Prostate gland (tissue), 2 donors: ENCODE measurements at regions of chr1 and their contacts with region 1.

Region 1: DNA sequence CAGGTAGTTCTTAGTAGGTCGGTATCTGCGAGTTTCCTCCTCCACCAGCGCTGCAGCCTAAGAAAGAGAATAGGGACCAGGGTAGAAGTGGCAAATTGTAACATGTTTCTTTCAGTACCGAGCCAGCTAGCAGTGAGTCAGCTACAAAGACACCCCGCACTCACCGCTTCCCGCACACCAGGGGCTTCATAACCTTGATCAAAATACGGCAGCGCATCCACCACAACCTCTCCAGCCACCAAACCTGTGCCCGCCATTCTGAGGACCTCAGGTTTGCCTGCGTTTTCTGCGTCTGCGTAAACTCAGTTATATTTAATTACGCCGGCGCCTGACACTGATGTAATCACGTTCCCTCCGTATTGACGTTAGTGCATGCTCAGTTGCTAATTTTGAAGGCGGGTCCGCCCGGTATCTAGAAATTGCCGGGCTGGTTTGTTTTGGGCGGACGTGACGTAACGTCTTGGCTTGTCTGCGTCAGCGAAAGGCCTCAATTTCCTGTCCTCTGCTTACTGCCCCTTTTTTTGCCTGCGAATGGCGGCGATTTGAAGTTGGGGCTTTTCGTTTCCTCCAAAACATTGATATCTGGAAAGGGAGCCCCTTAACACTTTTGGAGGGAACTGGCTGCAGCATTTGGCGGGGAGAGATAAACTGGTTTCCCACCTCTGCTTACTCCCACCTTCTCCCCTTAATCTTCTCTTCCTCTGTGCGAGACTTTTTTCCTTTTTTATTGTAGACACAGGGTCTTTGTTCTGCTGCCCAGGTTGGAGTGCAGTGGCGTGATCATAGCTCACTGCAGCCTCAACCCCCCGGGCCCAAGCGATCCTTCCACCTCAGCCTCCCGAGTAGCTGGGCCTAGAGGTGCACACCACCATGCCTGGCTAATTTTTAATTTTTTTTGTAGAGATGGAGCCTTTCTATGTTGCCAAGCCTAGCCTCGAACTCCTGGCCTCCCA is at the start of gene BCAS2:
- DNase-seq: peak; percentile 98
- H3K4me3 ChIP-seq: peak within 1 kb of the TSS; percentile 53 to 62
- H3K27ac ChIP-seq: peak within 1 kb of the TSS; percentile 88 to 90
- H3K4me1 ChIP-seq: peaks cover 2% of the 10 kb centered on the region
- H3K27me3 ChIP-seq: no peaks in the 10 kb centered on the region
- CTCF ChIP-seq: peak in 2 of 4 experiments; percentile 10 to 23
- POLR2A ChIP-seq: peak; percentile 92
- total RNA-seq, gene BCAS2: 35.9 to 38.5 TPM

Region 2: DNA sequence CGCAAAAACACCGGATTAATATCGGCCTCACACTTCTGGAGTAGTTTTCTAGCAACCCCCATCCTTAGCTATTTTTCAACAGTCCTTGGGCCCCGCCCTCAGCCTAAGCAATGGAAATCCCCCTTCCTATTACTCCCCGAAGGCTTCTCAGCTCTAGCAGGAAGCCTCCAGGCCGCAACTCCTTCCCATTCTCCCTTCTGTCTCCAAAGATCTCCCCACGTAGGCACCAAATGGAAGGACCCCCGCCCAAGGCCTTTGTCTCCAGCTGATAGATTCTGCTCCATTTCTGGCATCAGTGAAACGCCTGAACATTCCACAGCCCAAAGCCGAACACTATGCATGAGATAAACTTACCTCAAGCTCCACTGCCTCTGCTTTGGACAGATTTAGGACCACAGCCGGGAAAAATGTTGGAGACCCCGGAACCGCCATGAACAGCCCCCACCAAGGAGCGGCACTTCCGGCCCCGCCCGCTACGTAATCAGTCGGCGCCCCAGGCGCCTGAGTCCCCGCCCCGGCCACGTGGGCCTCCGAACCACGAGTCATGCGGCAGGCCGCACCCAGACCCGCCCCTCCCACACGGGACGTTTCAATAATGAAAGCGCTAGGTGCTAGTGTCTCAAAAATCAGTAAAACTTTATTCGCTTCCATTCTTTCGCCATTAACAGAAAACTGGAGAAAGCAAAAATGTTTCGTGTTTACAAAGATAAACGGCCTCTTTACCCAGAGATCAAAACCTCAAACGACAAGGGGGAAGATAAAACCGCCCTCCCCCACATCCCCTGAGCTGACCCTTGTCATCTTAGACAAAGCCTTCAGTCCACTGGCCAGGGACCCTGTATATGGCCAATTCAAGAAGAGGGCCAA is 134.9 kb after region 1 on chr1 and contains the start of gene NRAS:
- intact Hi-C with region 1: loop called (anchors 2 kb)
- DNase-seq: peak; percentile 92
- H3K4me3 ChIP-seq: peak within 1 kb of the TSS; percentile 73 to 80
- H3K27ac ChIP-seq: peak within 1 kb of the TSS; percentile 80 to 81
- H3K4me1 ChIP-seq: no peaks in the 10 kb centered on the region
- H3K27me3 ChIP-seq: no peaks in the 10 kb centered on the region
- CTCF ChIP-seq: peak in 2 of 4 experiments; percentile 16 to 19
- POLR2A ChIP-seq: peak; percentile 62
- total RNA-seq, gene NRAS: 23.4 to 24.6 TPM